H1 (cell line): ENCODE measurements at regions of chr1 and their contacts with region 1.

Region 1: GRCh38 chr1:64184003-64184440 is 19.4 kb upstream of the UBE2U start:
- DNase-seq: no peak
- H3K4me3 ChIP-seq: no peak overlapping the region
- H3K27ac ChIP-seq: no peak overlapping the region
- H3K4me1 ChIP-seq: 0 out of 7 replicates have a peak, but pooled peaks cover 0 to 2% (median 0%) of the 10 kb centered on the region in 4 experiments
- H3K27me3 ChIP-seq: no peaks in the 10 kb centered on the region
- CTCF ChIP-seq: no peak
- EP300 ChIP-seq: no peak
- POLR2A ChIP-seq: no peak
- RAD21 ChIP-seq: no peak

Region 2: DNA sequence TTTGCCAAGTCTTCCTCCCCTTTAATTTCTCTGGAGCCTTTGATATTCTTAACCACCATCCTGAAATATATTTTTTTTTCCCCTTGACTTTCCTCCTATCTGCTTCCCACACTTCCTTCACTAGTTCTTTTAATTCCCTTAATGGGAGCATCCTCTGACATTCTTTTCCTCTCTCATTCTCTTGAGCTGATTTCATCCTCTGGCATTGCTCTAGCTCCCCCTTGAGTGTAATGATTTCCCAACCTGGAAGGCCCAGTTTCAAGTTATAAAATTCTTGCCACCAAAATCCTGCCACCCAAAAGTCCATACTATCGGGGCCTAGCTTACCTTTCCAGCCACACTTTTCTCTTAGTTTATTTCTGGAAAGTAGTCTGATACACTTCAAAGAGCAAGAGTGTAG is 20.1 kb before region 1 on chr1:
- CTCF ChIA-PET with region 1: interaction called, 11 read pairs
- POLR2A ChIA-PET with region 1: no interaction called
- DNase-seq: no peak
- H3K4me3 ChIP-seq: no peak overlapping the region
- H3K27ac ChIP-seq: no peak overlapping the region
- H3K4me1 ChIP-seq: no peaks in the 10 kb centered on the region
- H3K27me3 ChIP-seq: no peaks in the 10 kb centered on the region
- CTCF ChIP-seq: peak in 2 of 3 experiments; percentile 52 to 62; a peak in 3 of 4 replicates
- EP300 ChIP-seq: no peak
- POLR2A ChIP-seq: no peak
- RAD21 ChIP-seq: peak; percentile 69 to 72

Region 3: DNA sequence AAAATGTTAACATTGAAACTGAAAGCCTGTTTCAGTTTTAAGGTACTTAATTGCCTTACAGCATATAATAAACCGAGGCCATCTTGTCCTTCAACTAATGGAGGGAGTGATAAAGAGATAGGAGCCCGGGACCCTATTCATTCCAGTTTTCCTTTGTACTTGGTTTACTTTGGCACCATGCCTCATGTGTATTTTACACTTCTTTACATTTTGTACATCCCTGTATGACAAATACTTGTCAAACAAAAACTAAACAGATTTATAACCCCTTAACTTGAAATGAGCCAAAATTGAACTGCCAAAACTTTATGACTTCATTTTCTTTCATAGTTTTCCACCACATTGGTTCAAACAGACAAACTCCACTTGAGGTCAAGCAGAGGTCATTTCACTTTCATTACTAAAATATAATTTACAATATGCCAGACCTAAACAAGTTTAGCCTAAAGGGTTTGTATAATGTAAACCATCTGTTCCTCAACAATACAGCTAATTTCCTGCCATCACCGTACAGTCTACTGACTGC is 11.5 kb before region 1 on chr1:
- CTCF ChIA-PET with region 1: interaction called, 12 read pairs
- POLR2A ChIA-PET with region 1: no interaction called
- DNase-seq: no peak
- H3K4me3 ChIP-seq: no peak overlapping the region
- H3K27ac ChIP-seq: no peak overlapping the region
- H3K4me1 ChIP-seq: peaks cover 0 to 3% (median 0%) of the 10 kb centered on the region in 4 experiments; a peak in 2 of 7 replicates
- H3K27me3 ChIP-seq: no peaks in the 10 kb centered on the region
- CTCF ChIP-seq: no peak
- EP300 ChIP-seq: no peak
- POLR2A ChIP-seq: no peak
- RAD21 ChIP-seq: no peak

Region 4: GRCh38 chr1:64194168-64195080 is 10.4 kb after region 1 on chr1:
- CTCF ChIA-PET with region 1: interaction called, 23 read pairs
- POLR2A ChIA-PET with region 1: interaction called, 4 read pairs
- DNase-seq: no peak
- H3K4me3 ChIP-seq: no peak overlapping the region
- H3K27ac ChIP-seq: no peak overlapping the region
- H3K4me1 ChIP-seq: peaks cover 0 to 5% (median 0%) of the 10 kb centered on the region in 4 experiments; a peak in 2 of 7 replicates
- H3K27me3 ChIP-seq: no peaks in the 10 kb centered on the region
- CTCF ChIP-seq: no peak
- EP300 ChIP-seq: no peak
- POLR2A ChIP-seq: no peak
- RAD21 ChIP-seq: no peak

Region 5: DNA sequence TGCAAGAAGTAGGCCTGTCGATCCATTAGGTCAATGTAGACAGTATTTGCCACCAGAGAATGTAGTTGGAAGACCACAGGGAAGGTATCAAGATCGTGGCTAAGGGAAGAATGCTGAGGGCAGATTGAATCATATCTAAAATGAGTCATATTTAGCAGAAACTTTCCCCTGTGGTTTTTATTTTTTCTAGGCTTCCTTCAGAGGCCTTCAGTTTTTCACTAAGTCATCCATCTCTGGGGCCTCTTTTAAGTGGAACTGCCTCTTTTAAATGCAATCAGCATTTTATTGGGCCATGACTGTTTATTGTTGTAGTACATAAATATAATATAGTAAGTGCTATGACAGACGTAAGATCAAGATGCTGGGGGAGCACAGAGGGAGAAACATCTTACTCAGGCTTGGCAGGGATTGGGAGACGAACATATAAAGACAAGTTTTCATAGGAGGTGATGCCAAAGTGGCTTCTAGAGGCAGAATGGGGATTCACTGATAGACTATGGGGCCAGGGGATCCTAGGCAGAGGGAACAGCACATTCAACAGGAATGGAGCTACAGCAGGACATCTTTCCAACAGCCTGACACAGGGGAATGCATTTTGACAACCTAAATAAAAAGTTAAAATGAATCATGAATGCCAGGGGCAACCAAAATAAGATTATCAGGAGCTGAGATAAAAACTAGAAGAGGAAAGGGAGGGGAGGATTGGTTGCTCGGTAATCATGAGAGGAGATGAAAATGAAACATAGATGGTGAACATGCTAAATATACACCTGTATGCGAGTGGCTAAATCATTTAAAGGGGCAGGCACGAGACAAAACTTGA is 39.5 kb after region 1 on chr1:
- CTCF ChIA-PET with region 1: no interaction called
- POLR2A ChIA-PET with region 1: no interaction called
- DNase-seq: no peak
- H3K4me3 ChIP-seq: no peak overlapping the region
- H3K27ac ChIP-seq: no peak overlapping the region
- H3K4me1 ChIP-seq: no peaks in the 10 kb centered on the region
- H3K27me3 ChIP-seq: no peaks in the 10 kb centered on the region
- CTCF ChIP-seq: no peak
- EP300 ChIP-seq: no peak
- POLR2A ChIP-seq: no peak
- RAD21 ChIP-seq: no peak

Region 6: GRCh38 chr1:64421377-64421776 is 237.4 kb after region 1 on chr1:
- CTCF ChIA-PET with region 1: no interaction called
- POLR2A ChIA-PET with region 1: no interaction called
- DNase-seq: no peak
- H3K4me3 ChIP-seq: no peak overlapping the region
- H3K27ac ChIP-seq: no peak overlapping the region
- H3K4me1 ChIP-seq: no peaks in the 10 kb centered on the region
- H3K27me3 ChIP-seq: no peaks in the 10 kb centered on the region
- CTCF ChIP-seq: no peak
- EP300 ChIP-seq: no peak
- POLR2A ChIP-seq: no peak
- RAD21 ChIP-seq: no peak